ENCODE measurements at regions of chr11 and their contacts with region 1.

Region 1: GRCh38 chr11:5808500-5809121 is at the start of gene OR52N2:
- DNase-seq: peak; percentile 59
- ATAC-seq: peak; percentile 95 to 97
- H3K4me3 ChIP-seq: peak within 1 kb of the TSS; percentile 56
- H3K27ac ChIP-seq: no peak within 1 kb of the TSS
- H3K4me1 ChIP-seq: peaks cover 11% of the 10 kb centered on the region
- H3K27me3 ChIP-seq: no peaks in the 10 kb centered on the region
- CTCF ChIP-seq: peak; percentile 83
- total RNA-seq, gene OR52N2: not detected

Region 2: DNA sequence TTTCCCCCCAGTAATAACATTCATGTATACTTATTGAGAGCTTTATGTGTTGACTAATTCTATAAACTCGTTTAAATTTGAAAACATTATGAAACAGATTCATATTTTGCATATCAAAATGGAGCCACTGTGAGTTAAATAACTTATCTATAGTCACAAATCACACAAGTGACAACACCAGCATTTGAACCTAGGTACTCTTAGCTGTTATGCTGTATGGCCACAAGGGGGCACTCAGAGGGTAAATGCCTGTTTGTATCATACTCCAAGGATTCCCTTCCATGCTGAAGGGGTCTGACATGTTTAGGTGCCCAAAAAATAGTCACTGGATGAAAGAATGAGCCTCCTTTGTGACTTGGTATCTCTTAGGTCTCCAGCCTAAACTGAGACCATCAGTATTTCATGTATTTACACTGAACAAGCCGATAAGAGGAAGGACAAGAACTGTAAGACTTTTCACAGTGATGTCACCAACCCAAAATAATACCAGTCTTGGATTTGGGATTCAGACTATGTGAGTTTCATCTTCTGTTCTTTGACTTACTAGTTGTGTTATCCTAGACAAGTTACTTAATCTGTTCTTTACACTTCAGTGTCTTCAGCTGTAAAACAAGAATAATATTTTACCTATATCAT is 332.3 kb before region 1 on chr11:
- intact Hi-C with region 1: loop called (anchors 10 kb)
- DNase-seq: no peak
- ATAC-seq: peak; percentile 72 to 78
- H3K4me3 ChIP-seq: no peak overlapping the region
- H3K27ac ChIP-seq: no peak overlapping the region
- H3K4me1 ChIP-seq: no peaks in the 10 kb centered on the region
- H3K27me3 ChIP-seq: no peaks in the 10 kb centered on the region
- CTCF ChIP-seq: peak; percentile 83